K562 (cell line): ENCODE measurements at regions of chr1 and their contacts with region 1.

Region 1: DNA sequence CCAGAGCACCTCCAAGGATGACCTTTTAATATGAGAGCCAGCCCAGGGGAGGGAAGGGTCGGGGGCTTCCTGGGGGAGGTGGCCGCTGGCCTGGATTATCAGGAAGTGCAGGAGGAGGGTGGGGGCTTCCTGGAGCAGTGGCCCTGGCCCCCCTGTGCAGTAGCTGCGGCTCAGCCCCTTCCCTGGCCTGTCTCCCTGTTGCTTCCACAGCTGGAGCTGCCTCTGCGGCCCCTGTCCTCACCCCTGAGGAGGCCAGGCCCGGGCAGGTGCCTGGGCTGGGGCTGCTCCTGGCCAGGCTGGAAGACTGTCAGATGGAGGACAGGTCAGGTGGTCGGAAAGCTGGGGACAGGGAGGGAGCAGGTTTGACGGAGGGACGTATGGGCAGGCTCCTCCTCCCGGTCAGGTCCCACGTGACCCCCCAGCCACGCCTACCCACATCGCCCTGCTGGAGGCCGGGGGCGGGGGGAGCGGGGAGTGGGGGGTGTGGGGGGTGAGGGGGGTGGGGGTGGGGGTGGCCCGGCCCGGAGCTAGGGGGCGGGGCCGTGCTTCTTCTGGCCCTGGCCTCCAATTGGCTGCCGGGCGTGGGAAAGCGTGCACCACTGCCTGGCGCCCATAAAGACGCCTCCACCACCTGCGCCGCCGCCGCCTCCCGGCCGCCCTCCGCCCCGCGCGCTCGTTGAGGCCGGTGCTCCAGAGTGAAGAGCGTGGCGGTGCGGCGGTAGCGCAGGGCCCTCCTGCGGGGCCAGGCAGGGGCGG is 10.2 kb upstream of the TNFRSF14 start:
- DNase-seq: peak; percentile 96 to 99 (median 98)
- ATAC-seq: peak; percentile 73
- H3K4me3 ChIP-seq: peak overlapping the region; percentile 62
- H3K27ac ChIP-seq: peak overlapping the region; percentile 79
- H3K4me1 ChIP-seq: peaks cover 72 to 90% of the 10 kb centered on the region in 2 experiments
- H3K27me3 ChIP-seq: no peaks in the 10 kb centered on the region
- CTCF ChIP-seq: no peak
- EP300 ChIP-seq: no peak
- POLR2A ChIP-seq: peak; percentile 79
- RAD21 ChIP-seq: no peak

Region 2: DNA sequence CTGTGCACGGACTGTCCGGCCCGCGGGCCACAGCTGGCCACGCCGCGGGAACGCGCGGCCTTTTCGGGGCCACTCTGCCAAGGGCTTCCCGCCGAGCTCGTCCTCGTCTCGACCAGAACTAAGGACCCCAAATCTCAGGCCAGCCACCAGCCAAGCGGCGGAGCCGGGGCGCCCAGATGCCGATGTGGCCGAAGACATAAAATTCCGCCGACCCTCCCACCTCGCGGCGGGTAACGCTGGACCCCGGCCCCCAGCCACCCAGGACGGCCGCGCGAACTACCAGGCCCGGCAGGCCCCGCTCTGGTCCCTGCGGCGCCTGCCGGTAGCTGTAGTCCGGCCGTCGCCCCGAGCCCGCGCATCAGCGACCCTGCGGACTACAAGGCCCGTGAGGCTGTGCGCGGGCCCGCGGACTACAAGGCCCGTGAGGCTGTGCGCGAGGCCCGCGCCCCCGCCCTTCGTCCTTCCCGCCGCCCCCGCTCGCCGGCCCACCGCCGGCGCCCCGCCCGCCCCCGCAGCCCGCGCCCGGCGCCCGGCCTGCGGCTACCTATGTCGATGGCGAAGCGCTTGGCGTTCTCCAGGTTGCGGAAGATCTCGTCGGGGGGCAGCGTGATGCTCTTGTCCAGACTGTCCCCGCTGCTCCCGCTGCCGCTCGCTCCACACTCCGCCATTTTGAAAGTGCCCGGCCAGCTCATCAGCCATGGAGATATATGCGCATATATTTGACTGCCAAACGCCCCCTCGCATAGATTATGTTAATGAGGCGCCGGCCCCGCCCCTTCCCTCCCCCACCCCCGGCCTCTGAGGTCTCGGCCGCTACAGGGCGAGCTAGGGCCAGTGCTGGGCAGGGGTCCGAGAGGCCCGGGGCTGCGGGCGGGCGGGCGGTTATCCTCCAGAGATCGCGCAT is 19.8 kb before region 1 on chr1 and contains the start of gene PANK4:
- CTCF ChIA-PET with region 1: interaction called, 3 read pairs
- POLR2A ChIA-PET with region 1: interaction called, 6 read pairs
- in situ Hi-C with region 1: no loop called
- intact Hi-C with region 1: loop called (anchors 1 kb)
- DNase-seq: peak; percentile 89 to 97 (median 93)
- ATAC-seq: peak; percentile 95
- H3K4me3 ChIP-seq: peak within 1 kb of the TSS; percentile 99
- H3K27ac ChIP-seq: peak within 1 kb of the TSS; percentile 84
- H3K4me1 ChIP-seq: peaks cover 24 to 82% of the 10 kb centered on the region in 2 experiments; a peak in 4 of 5 replicates
- H3K27me3 ChIP-seq: peaks cover 19 to 21% of the 10 kb centered on the region in 2 experiments; a peak in 4 of 5 replicates
- CTCF ChIP-seq: no peak
- EP300 ChIP-seq: no peak
- POLR2A ChIP-seq: peak; percentile 85
- RAD21 ChIP-seq: no peak
- polyA plus RNA-seq, gene PANK4: 0.93 to 1.4 TPM

Region 3: GRCh38 chr1:2586154-2587070 is 40.5 kb after region 1 on chr1 and contains the start of gene PRXL2B:
- CTCF ChIA-PET with region 1: no interaction called
- POLR2A ChIA-PET with region 1: interaction called, 5 read pairs
- in situ Hi-C with region 1: no loop called
- intact Hi-C with region 1: loop called (anchors 5 kb)
- DNase-seq: peak; percentile 99 to 100 (median 99)
- ATAC-seq: peak; percentile 95
- H3K4me3 ChIP-seq: peak within 1 kb of the TSS; percentile 71
- H3K27ac ChIP-seq: peak within 1 kb of the TSS; percentile 93
- H3K4me1 ChIP-seq: peaks cover 20 to 57% of the 10 kb centered on the region in 2 experiments
- H3K27me3 ChIP-seq: peaks cover 5 to 6% of the 10 kb centered on the region in 2 experiments; a peak in 4 of 5 replicates
- CTCF ChIP-seq: no peak
- EP300 ChIP-seq: no peak; the same call in 1 of the 2 replicates
- POLR2A ChIP-seq: peak; percentile 76
- RAD21 ChIP-seq: no peak
- polyA plus RNA-seq, gene PRXL2B: 0.99 to 1.7 TPM

Region 4: GRCh38 chr1:2642560-2643413 is 96.8 kb after region 1 on chr1:
- CTCF ChIA-PET with region 1: no interaction called
- POLR2A ChIA-PET with region 1: interaction called, 3 read pairs
- in situ Hi-C with region 1: no loop called
- intact Hi-C with region 1: loop called (anchors 10 kb)
- DNase-seq: peak; percentile 94 to 100 (median 100)
- ATAC-seq: peak; percentile 93
- H3K4me3 ChIP-seq: peak overlapping the region; percentile 66
- H3K27ac ChIP-seq: peak overlapping the region; percentile 76
- H3K4me1 ChIP-seq: peaks cover 0 to 37% of the 10 kb centered on the region in 2 experiments; a peak in 2 of 5 replicates
- H3K27me3 ChIP-seq: peaks cover 0 to 12% of the 10 kb centered on the region in 2 experiments; a peak in 2 of 5 replicates
- CTCF ChIP-seq: peak; percentile 8 to 23 (median 13); a peak in 3 of 6 replicates
- EP300 ChIP-seq: no peak
- POLR2A ChIP-seq: peak; percentile 78
- RAD21 ChIP-seq: no peak

Region 5: DNA sequence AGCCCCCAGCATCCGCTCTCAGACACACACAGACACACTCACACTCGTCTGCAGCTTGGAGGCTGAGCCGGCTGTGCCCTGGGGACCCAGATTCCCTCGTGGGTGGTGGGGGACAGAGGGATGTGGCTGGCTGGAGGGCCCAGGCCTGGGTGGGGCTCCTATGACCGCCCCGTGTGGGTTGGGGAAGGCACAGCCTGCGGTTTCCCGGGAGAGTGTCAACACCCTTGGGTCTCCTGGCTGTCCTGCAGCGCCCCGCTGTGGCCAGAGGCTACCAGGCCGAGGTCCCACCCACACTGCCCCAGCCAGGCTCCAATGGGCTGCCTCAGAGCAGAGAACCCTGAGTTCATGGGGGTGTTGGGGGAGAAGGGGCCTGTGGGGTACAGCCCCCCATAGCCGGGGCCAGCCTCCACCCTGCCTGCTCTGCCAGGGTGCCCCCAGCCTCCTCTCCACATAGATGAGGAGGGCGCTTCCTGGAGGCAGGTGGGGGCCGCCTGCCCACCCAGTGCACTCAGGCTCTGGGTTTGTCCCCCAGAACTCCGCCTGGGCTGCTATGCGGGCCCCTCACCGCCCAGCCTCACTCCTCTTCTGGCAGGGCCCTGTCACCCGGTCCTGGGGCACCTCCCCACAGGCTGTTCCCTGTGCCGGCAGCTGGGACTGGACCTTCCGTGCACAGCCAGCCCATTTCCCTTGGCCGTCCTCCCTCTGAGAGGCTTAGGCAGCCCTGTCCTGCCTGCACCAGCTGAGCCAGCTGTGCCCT is 255.8 kb after region 1 on chr1 and contains the start of gene TTC34:
- CTCF ChIA-PET with region 1: no interaction called
- POLR2A ChIA-PET with region 1: no interaction called
- in situ Hi-C with region 1: no loop called
- intact Hi-C with region 1: loop called (anchors 1 kb)
- DNase-seq: peak; percentile 76 to 90 (median 89)
- ATAC-seq: peak; percentile 99
- H3K4me3 ChIP-seq: no peak within 1 kb of the TSS
- H3K27ac ChIP-seq: no peak within 1 kb of the TSS
- H3K4me1 ChIP-seq: peaks cover 0 to 34% of the 10 kb centered on the region in 2 experiments; a peak in 1 of 5 replicates
- H3K27me3 ChIP-seq: peaks cover 0 to 27% of the 10 kb centered on the region in 2 experiments; a peak in 3 of 5 replicates
- CTCF ChIP-seq: peak; percentile 78 to 90 (median 89)
- EP300 ChIP-seq: no peak
- POLR2A ChIP-seq: no peak
- RAD21 ChIP-seq: peak; percentile 56 to 80; a peak in 3 of 4 replicates
- polyA plus RNA-seq, gene TTC34: not detected